Caco-2 (cell line): ENCODE measurements at regions of chr13 and their contacts with region 1.

Region 1: DNA sequence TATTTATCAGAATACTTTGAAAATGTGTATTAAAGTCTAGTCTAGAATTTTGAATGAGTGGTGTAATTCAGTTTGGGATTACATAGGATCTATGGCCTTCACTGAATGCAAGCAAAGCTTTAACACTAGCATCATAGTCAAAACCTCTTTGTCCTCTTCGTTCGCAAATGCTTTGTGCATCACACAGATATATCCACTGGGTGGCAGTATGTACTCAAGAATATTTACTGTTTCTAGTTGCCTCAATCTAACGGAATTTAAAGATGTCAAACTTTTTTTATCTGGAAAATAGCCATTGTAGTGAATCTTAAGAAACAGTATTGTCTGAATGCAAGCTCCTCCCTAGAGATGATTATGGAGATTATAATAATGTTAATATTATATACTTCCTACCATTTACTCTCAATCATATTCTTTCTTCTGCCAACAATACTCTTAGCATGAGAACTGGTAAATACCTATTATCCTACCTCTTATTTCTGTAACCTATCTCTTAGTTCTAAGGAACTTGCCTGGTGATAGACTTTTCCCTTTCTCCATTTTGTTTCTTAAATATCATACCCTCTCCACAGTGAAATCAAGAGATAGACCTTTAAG is 25.8 kb downstream of the LACC1 start:
- DNase-seq: peak in 1 of 2 experiments; percentile 63
- H3K4me3 ChIP-seq: no peak overlapping the region
- H3K4me3 Mint-ChIP-seq: no peak overlapping the region
- H3K27ac Mint-ChIP-seq: no peak overlapping the region
- H3K4me1 ChIP-seq: no peaks in the 10 kb centered on the region
- H3K4me1 Mint-ChIP-seq: peaks cover 7% of the 10 kb centered on the region
- H3K27me3 ChIP-seq: no peaks in the 10 kb centered on the region
- H3K27me3 Mint-ChIP-seq: peaks cover 2% of the 10 kb centered on the region
- CTCF ChIP-seq: peak; percentile 63 to 86

Region 2: DNA sequence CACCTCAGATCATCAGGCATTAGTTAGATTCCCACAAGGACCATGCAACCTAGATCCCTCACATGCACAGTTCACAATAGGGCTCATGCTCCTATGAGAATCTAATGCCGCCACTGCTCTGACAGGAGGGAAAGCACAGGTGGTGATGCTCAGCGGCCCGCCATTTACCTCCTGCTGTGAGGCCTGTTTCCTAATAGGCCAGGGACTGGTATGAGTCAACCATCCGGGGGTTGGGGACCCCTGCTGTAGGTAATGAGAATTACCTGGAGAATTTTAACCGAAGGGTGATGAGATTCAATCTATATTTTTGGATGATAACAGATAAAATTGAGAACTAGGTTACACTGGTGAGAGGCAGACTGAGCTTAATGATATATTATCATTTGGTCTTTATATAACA is 75.6 kb after region 1 on chr13:
- CTCF ChIA-PET with region 1: no interaction called
- POLR2A ChIA-PET with region 1: no interaction called
- intact Hi-C with region 1: loop called (anchors 2 kb)
- DNase-seq: peak in 1 of 2 experiments; percentile 32
- H3K4me3 ChIP-seq: no peak overlapping the region
- H3K4me3 Mint-ChIP-seq: no peak overlapping the region
- H3K27ac Mint-ChIP-seq: no peak overlapping the region
- H3K4me1 ChIP-seq: no peaks in the 10 kb centered on the region
- H3K4me1 Mint-ChIP-seq: peaks cover 4% of the 10 kb centered on the region
- H3K27me3 ChIP-seq: no peaks in the 10 kb centered on the region
- H3K27me3 Mint-ChIP-seq: peaks cover 4% of the 10 kb centered on the region
- CTCF ChIP-seq: peak; percentile 23 to 34

Region 3: GRCh38 chr13:44030615-44031014 is 125.1 kb after region 1 on chr13:
- CTCF ChIA-PET with region 1: no interaction called
- POLR2A ChIA-PET with region 1: no interaction called
- intact Hi-C with region 1: loop called (anchors 5 kb)
- DNase-seq: no peak
- H3K4me3 ChIP-seq: no peak overlapping the region
- H3K4me3 Mint-ChIP-seq: no peak overlapping the region
- H3K27ac Mint-ChIP-seq: no peak overlapping the region
- H3K4me1 ChIP-seq: no peaks in the 10 kb centered on the region
- H3K4me1 Mint-ChIP-seq: no peaks in the 10 kb centered on the region
- H3K27me3 ChIP-seq: no peaks in the 10 kb centered on the region
- H3K27me3 Mint-ChIP-seq: no peaks in the 10 kb centered on the region
- CTCF ChIP-seq: no peak

Region 4: GRCh38 chr13:44243198-44243857 is 337.8 kb after region 1 on chr13:
- CTCF ChIA-PET with region 1: no interaction called
- POLR2A ChIA-PET with region 1: no interaction called
- intact Hi-C with region 1: loop called (anchors 10 kb)
- DNase-seq: peak; percentile 57 to 75
- H3K4me3 ChIP-seq: no peak overlapping the region
- H3K4me3 Mint-ChIP-seq: no peak overlapping the region
- H3K27ac Mint-ChIP-seq: peak overlapping the region; percentile 62
- H3K4me1 ChIP-seq: peaks cover 22% of the 10 kb centered on the region
- H3K4me1 Mint-ChIP-seq: peaks cover 36% of the 10 kb centered on the region
- H3K27me3 ChIP-seq: no peaks in the 10 kb centered on the region
- H3K27me3 Mint-ChIP-seq: no peaks in the 10 kb centered on the region
- CTCF ChIP-seq: peak; percentile 46 to 56

Region 5: DNA sequence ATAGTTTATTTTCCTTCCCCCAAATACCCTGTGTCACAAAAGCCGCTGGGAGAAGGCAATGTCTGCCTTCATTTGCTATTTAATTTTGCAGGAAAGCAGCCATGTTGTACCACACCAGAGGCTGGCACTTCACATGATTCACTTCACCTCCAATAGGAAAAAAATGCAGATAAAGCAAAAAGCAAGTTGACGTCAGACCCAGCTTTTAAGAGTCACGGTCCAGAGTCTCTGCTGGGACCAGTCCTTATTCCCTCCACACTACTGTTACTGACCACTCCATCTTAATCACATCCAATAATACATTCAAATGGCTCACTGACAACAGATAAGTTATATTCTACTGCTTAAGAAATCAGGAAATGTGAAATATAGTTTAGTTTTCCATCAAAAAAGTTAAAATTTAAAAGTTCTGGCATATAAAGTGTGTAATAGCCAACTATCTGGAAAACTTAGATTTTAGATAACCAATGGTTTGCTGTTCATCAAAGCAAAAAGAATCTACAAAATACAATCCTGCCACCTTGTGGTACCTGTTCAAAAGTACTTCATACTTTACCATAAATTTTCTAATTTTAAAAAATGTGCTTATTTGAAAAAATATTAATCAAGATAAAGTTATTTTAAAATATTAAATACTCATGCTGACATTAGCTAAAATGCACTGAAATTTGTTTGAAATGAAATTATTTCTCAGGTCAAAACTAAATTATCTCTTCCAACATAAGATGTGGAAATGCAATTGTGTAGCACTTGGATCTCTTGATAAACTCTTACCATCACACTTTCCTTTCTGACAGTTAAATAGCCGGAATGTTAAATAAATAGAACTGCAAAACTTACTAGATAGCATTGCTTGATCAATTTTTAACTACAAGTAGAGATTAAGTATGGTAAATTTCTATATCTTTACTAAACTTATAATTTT is 565.4 kb after region 1 on chr13:
- CTCF ChIA-PET with region 1: interaction called, 3 read pairs
- POLR2A ChIA-PET with region 1: no interaction called
- intact Hi-C with region 1: loop called (anchors 1 kb)
- DNase-seq: peak in 1 of 2 experiments; percentile 39
- H3K4me3 ChIP-seq: no peak overlapping the region
- H3K4me3 Mint-ChIP-seq: no peak overlapping the region
- H3K27ac Mint-ChIP-seq: no peak overlapping the region
- H3K4me1 ChIP-seq: peaks cover 19% of the 10 kb centered on the region
- H3K4me1 Mint-ChIP-seq: peaks cover 15% of the 10 kb centered on the region
- H3K27me3 ChIP-seq: no peaks in the 10 kb centered on the region
- H3K27me3 Mint-ChIP-seq: no peaks in the 10 kb centered on the region
- CTCF ChIP-seq: peak; percentile 55 to 66